Activated CD4-positive, alpha-beta memory T cell treated with anti-CD3 and anti-CD28 coated beads, Interleukin-2, amount 10 ng/mL, durations not matched to agents 7 days and 5 days (primary cell): ENCODE measurements at regions of chr10 and their contacts with region 1.

Region 1: DNA sequence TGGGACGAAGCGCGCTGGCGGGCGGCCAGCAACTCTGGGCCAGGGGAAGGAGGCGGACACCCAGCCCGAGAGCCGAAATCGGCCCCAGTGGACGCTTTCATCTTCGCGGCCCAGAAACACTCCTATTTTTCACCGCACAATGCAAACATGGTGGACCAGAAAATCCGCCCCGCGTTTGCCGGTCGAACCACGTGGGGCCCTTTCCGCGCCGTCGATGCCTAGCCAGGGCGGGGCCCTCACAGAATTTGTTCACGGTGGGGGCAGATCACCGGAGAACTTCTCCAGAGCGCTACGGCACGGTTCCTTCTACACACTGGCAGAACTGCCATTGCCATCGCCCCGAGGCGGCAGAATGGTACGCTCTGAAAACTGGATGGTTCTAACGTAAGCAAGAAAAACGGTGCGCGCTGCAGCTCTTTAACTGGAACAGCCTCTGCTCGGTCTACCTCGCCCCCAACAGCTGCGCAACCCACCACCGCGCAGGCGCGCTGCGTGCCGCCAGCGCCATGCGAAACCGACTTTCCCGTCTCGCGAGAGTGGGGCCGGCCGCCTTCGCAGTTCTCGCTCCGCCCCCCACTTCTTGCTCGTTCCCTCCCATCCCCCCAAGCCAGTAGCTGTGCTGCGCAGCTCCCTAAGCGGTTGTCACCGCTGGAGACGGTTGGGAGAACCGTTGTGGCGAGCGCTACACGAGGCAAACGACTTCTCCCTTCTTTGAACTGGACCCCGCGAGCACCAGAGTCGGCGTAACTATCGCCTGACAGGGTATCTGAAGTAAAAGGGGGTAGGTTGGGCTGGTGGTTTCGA is at the start of gene HNRNPH3:
- DNase-seq: peak; percentile 99
- H3K4me3 Mint-ChIP-seq: peak within 1 kb of the TSS; percentile 100
- H3K27ac Mint-ChIP-seq: peak within 1 kb of the TSS; percentile 100
- H3K4me1 Mint-ChIP-seq: peaks cover 45% of the 10 kb centered on the region
- H3K27me3 Mint-ChIP-seq: no peaks in the 10 kb centered on the region
- total RNA-seq, gene HNRNPH3: 122 to 123 TPM

Region 2: DNA sequence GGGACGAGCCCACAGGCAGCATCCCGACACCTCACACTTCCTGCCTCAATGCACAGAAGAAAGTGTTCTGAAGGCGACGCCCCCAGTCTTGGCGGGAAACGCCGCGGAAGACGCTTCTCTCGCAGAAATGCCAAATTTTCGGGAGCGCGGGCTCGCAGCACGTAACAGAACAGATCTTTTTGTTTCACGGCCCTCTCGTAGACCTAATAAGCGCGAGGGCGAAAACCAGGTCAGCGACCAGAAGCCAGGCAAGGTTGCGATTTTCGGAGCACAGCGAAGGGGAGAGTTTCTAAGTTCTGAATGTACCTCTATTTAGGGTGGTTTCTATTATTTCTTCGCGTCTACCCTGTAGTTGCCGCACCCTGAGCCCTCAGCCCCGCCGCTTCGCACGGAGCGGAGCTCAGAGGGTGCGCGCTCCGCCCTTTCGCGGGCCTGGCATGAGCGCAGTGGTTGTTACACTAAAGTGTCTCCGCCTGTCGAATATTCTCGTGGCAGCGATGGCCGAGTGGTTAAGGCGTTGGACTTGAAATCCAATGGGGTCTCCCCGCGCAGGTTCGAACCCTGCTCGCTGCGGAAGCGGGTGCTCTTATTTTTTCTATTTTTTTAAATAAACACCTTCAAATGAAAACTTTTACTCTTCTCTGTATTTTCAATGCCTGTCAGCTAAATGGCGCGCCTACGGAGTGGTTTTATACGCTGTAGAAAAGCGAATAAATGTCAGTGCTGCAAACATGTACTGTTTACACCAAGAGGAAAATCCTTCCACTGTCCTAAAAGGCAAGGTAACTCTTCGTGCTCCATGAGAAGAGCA is 567.4 kb before region 1 on chr10:
- CTCF ChIA-PET with region 1: no interaction called
- POLR2A ChIA-PET with region 1: interaction called, 12 read pairs
- DNase-seq: peak; percentile 97
- H3K4me3 Mint-ChIP-seq: peak overlapping the region; percentile 72
- H3K27ac Mint-ChIP-seq: peak overlapping the region; percentile 88
- H3K4me1 Mint-ChIP-seq: peaks cover 21% of the 10 kb centered on the region
- H3K27me3 Mint-ChIP-seq: peaks cover 2% of the 10 kb centered on the region

Region 3: GRCh38 chr10:68074775-68075549 is 256.7 kb before region 1 on chr10 and contains the start of gene HERC4:
- CTCF ChIA-PET with region 1: no interaction called
- POLR2A ChIA-PET with region 1: interaction called, 12 read pairs
- DNase-seq: peak; percentile 92
- H3K4me3 Mint-ChIP-seq: peak within 1 kb of the TSS; percentile 94
- H3K27ac Mint-ChIP-seq: peak within 1 kb of the TSS; percentile 92
- H3K4me1 Mint-ChIP-seq: peaks cover 44% of the 10 kb centered on the region
- H3K27me3 Mint-ChIP-seq: no peaks in the 10 kb centered on the region
- total RNA-seq, gene HERC4: 64.2 to 65.2 TPM

Region 4: GRCh38 chr10:68342909-68343516 is 11.4 kb after region 1 on chr10:
- CTCF ChIA-PET with region 1: interaction called, 34 read pairs
- POLR2A ChIA-PET with region 1: interaction called, 25 read pairs
- DNase-seq: no peak
- H3K4me3 Mint-ChIP-seq: no peak overlapping the region
- H3K27ac Mint-ChIP-seq: no peak overlapping the region
- H3K4me1 Mint-ChIP-seq: peaks cover 22% of the 10 kb centered on the region
- H3K27me3 Mint-ChIP-seq: no peaks in the 10 kb centered on the region

Region 5: GRCh38 chr10:68406815-68407548 is 75.3 kb after region 1 on chr10 and contains the start of gene RUFY2:
- CTCF ChIA-PET with region 1: interaction called, 3 read pairs
- POLR2A ChIA-PET with region 1: interaction called, 10 read pairs
- DNase-seq: peak; percentile 81
- H3K4me3 Mint-ChIP-seq: peak within 1 kb of the TSS; percentile 85
- H3K27ac Mint-ChIP-seq: peak within 1 kb of the TSS; percentile 70
- H3K4me1 Mint-ChIP-seq: peaks cover 15% of the 10 kb centered on the region
- H3K27me3 Mint-ChIP-seq: no peaks in the 10 kb centered on the region
- total RNA-seq, gene RUFY2: 12.2 to 13.3 TPM

Region 6: DNA sequence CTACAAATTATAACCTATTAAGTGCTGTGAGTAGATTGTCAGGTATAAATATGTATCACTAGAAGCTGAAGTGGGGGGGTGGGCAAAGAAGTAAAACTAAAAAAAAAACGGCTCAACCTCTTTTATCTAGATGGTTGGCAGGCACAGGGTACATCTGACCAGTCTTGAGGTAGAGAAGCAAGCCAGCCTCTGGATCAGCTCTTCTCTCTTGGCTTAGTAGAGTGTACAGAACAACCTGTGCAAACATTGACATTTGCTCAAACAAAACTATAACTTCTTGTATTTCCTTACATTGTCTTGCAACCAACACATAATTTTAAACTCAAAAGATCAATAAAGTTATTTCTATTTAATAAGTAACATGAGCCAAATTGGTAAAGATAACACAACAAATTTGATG is 114.5 kb after region 1 on chr10:
- CTCF ChIA-PET with region 1: no interaction called
- POLR2A ChIA-PET with region 1: no interaction called
- DNase-seq: no peak
- H3K4me3 Mint-ChIP-seq: no peak overlapping the region
- H3K27ac Mint-ChIP-seq: no peak overlapping the region
- H3K4me1 Mint-ChIP-seq: no peaks in the 10 kb centered on the region
- H3K27me3 Mint-ChIP-seq: no peaks in the 10 kb centered on the region